Activated T-helper 2 cell treated with anti-CD3 and anti-CD28 coated beads, Interferon-gamma antibody, Interleukin-2, Interleukin-4, amounts not matched to agents 10 μg/mL and 5 μg/mL and 100 μg/mL, durations not matched to agents 14 hours and 24 hours and 36 hours (primary cell): ENCODE measurements at regions of chr6 and their contacts with region 1.

Region 1: DNA sequence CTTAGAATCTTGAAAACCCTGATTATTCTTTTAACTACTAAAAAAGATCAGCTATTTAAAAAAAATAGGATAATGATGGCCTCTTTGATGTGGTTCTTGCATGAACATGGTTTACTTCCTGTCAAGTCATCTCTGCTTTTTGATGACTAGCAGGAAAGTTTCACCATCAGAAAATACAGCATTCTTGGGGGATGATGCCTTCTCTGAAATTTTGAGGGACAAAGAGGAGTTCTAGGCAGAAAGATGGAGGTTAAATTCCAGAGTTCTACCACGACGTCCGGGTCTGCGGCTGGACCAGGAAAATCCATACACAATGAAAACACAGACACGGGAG is 130.4 kb downstream of the OLIG3 start:
- DNase-seq: no peak
- H3K4me3 Mint-ChIP-seq: no peak overlapping the region
- H3K27ac Mint-ChIP-seq: peak overlapping the region; percentile 34
- H3K4me1 Mint-ChIP-seq: peaks cover 18% of the 10 kb centered on the region
- H3K27me3 Mint-ChIP-seq: peaks cover 7% of the 10 kb centered on the region

Region 2: GRCh38 chr6:137181891-137182653 is 181.7 kb before region 1 on chr6:
- intact Hi-C with region 1: no loop called
- DNase-seq: no peak
- H3K4me3 Mint-ChIP-seq: no peak overlapping the region
- H3K27ac Mint-ChIP-seq: no peak overlapping the region
- H3K4me1 Mint-ChIP-seq: no peaks in the 10 kb centered on the region
- H3K27me3 Mint-ChIP-seq: peaks cover 2% of the 10 kb centered on the region

Region 3: GRCh38 chr6:137389150-137389704 is 25.5 kb after region 1 on chr6:
- intact Hi-C with region 1: loop called (anchors 2 kb)
- DNase-seq: peak; percentile 61
- H3K4me3 Mint-ChIP-seq: peak overlapping the region; percentile 15
- H3K27ac Mint-ChIP-seq: peak overlapping the region; percentile 31
- H3K4me1 Mint-ChIP-seq: peaks cover 23% of the 10 kb centered on the region
- H3K27me3 Mint-ChIP-seq: no peaks in the 10 kb centered on the region

Region 4: GRCh38 chr6:137399881-137400443 is 36.2 kb after region 1 on chr6:
- intact Hi-C with region 1: loop called (anchors 5 kb)
- DNase-seq: no peak
- H3K4me3 Mint-ChIP-seq: no peak overlapping the region
- H3K27ac Mint-ChIP-seq: no peak overlapping the region
- H3K4me1 Mint-ChIP-seq: peaks cover 15% of the 10 kb centered on the region
- H3K27me3 Mint-ChIP-seq: peaks cover 2% of the 10 kb centered on the region